ENCODE measurements at regions of chr2 and their contacts with region 1.

Region 1: DNA sequence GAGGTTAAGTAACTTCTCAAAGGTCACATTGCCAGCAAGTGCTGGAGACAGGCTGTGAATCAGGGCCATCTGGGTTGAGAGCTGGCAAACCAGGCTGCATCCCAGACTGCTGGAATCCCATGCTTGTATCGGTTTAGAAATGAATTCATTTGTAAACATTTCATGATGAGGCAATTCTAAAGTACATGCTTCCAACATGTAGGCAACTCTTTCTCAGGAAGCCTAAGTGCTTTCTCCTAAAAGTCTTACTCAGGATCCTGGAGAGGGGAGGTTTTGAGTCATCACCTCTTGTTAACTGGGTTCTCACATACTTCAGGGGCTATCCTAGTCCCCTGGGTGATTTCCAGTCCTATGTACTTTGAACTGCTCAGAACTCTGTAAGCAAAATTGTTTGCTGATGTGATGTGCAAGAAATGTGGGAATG is 416.5 kb downstream of the MEIS1 start:
- DNase-seq: no peak
- H3K4me3 ChIP-seq: no peak overlapping the region
- H3K27ac ChIP-seq: no peak overlapping the region
- H3K4me1 ChIP-seq: peaks cover 4% of the 10 kb centered on the region
- H3K27me3 ChIP-seq: no peaks in the 10 kb centered on the region
- CTCF ChIP-seq: no peak
- POLR2A ChIP-seq: no peak

Region 2: GRCh38 chr2:66699793-66700676 is 151.4 kb before region 1 on chr2:
- intact Hi-C with region 1: loop called (anchors 10 kb)
- DNase-seq: no peak
- H3K4me3 ChIP-seq: no peak overlapping the region
- H3K27ac ChIP-seq: peak overlapping the region; percentile 53
- H3K4me1 ChIP-seq: peaks cover 12% of the 10 kb centered on the region
- H3K27me3 ChIP-seq: no peaks in the 10 kb centered on the region
- CTCF ChIP-seq: no peak
- POLR2A ChIP-seq: no peak

Measured in vagina (tissue), 2 donors.